ENCODE measurements at regions of chr15 and their contacts with region 1.

Region 1: DNA sequence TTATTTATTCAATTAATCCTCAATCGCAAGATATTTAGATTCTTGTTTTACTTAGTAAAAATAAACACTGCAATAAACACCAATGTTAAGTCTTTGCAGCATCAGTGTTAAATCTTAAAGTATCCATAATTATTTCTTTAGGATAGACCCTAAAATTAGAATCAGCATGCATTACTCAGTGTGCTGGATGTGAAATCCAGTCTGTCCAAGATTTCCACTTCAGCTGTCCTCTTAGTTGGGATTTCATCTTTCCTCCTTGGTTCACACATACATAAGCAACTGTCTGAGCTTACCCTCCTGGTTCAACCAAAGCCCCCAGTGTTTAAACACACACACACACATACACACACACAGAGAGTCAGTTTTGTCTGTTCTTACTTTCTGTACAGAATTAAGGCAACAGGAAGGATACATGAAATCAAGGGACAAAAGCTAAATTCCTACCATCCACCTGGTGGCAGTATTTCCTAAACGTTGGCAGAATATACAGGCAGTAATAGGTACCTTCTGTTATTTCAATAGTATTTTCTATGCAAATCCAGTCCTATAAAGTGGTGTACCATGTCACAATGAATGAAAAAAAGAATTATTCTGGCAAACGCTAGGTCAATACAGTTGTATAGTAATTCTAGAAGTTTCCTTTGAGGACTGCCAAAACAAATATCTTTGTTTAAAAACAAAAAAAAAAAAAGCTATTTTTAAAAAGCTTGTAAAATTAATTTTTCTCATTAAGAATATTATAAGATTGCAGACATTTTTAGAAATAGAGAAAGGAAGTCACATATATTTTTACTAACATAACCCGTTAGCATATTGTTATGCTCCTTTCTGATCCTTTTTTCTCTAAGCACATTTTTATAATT is 27.3 kb upstream of the DMXL2 start:
- DNase-seq: peak; percentile 47 to 88 (median 56)
- ATAC-seq: peak; percentile 74
- H3K4me3 ChIP-seq: no peak overlapping the region
- H3K27ac ChIP-seq: no peak overlapping the region
- H3K4me1 ChIP-seq: peaks cover 18 to 40% of the 10 kb centered on the region in 2 experiments
- H3K27me3 ChIP-seq: no peaks in the 10 kb centered on the region
- CTCF ChIP-seq: peak; percentile 74 to 95 (median 77); a peak in 5 of 6 replicates
- EP300 ChIP-seq: no peak
- POLR2A ChIP-seq: no peak
- RAD21 ChIP-seq: peak; percentile 99 to 100

Region 2: GRCh38 chr15:51401872-51402517 is 247.9 kb before region 1 on chr15:
- CTCF ChIA-PET with region 1: no interaction called
- POLR2A ChIA-PET with region 1: no interaction called
- in situ Hi-C with region 1: no loop called
- intact Hi-C with region 1: loop called (anchors 5 kb)
- DNase-seq: peak; percentile 54 to 68 (median 60)
- ATAC-seq: peak; percentile 84
- H3K4me3 ChIP-seq: no peak overlapping the region
- H3K27ac ChIP-seq: no peak overlapping the region
- H3K4me1 ChIP-seq: no peaks in the 10 kb centered on the region
- H3K27me3 ChIP-seq: peaks cover 39 to 40% of the 10 kb centered on the region in 2 experiments
- CTCF ChIP-seq: peak; percentile 73 to 87 (median 76)
- EP300 ChIP-seq: no peak
- POLR2A ChIP-seq: no peak
- RAD21 ChIP-seq: peak; percentile 47 to 70

Region 3: GRCh38 chr15:51672155-51672687 is 22.3 kb after region 1 on chr15:
- CTCF ChIA-PET with region 1: no interaction called
- POLR2A ChIA-PET with region 1: no interaction called
- in situ Hi-C with region 1: no loop called
- intact Hi-C with region 1: loop called (anchors 1 kb)
- DNase-seq: peak; percentile 27 to 81 (median 54)
- ATAC-seq: peak; percentile 79
- H3K4me3 ChIP-seq: no peak overlapping the region
- H3K27ac ChIP-seq: peak overlapping the region; percentile 72; the same call in 2 of the 3 replicates
- H3K4me1 ChIP-seq: peaks cover 24 to 38% of the 10 kb centered on the region in 2 experiments; a peak in 4 of 5 replicates
- H3K27me3 ChIP-seq: no peaks in the 10 kb centered on the region
- CTCF ChIP-seq: no peak
- EP300 ChIP-seq: peak; percentile 16; the same call in 1 of the 2 replicates
- POLR2A ChIP-seq: no peak
- RAD21 ChIP-seq: peak in 1 of 2 experiments; percentile 11; a peak in 1 of 4 replicates

Region 4: DNA sequence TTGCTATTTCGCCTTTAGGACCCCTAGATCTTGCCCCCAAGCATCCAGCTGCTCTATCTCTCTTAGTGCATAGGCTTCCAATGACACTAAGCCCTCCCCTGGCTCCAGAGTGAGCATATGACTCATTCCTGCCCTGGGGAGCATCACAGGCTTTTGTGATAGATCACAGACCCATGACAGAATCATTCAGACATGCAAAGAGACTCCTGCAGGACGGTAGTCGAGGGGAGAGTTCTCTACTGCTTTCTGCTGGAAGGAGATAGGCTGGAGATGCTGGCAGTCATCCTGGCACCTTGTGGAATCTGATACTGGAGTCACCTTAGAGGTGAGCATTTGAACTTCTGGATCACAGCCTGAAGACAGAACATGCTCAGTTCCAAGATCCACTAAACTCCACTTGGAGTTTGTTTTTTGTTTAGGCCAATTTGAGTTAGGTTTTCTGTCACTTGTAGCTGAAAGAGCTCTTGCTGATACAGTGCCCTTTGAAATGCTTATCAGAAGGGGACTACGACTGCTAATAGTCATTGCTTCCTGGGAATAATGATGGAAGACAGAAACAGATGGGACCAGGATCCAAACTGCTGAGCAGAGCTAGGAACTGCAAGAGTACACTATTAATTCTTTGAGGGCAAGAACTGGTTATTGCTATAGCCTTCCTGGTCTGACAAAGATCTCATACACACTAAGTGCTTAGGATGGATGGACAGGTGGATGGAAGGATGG is 76.6 kb after region 1 on chr15:
- CTCF ChIA-PET with region 1: interaction called, 3 read pairs
- POLR2A ChIA-PET with region 1: no interaction called
- in situ Hi-C with region 1: no loop called
- intact Hi-C with region 1: loop called (anchors 2 kb)
- DNase-seq: peak; percentile 74 to 84 (median 82)
- ATAC-seq: peak; percentile 93
- H3K4me3 ChIP-seq: no peak overlapping the region
- H3K27ac ChIP-seq: no peak overlapping the region
- H3K4me1 ChIP-seq: peaks cover 0 to 33% of the 10 kb centered on the region in 2 experiments; a peak in 4 of 5 replicates
- H3K27me3 ChIP-seq: no peaks in the 10 kb centered on the region
- CTCF ChIP-seq: no peak
- EP300 ChIP-seq: no peak
- POLR2A ChIP-seq: no peak
- RAD21 ChIP-seq: no peak

Region 5: DNA sequence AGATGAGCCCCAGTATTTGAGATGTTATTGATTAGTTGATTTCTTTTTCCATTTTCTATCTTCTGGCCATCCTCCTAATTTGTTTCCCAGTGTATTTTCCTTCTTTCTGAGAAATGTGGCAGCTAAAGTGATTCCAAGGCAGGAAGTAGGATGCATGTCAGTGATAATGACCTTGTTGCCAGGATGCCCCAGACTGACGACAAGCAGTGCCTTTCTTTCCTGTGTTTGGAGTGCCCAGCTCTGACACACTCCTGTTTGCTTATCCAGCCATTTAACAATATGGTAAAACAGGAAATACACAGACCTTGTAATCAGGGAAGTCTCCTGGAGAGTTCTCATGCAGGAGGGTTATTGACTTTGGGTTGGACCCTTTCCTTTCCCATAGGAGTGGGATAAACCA is 121.9 kb after region 1 on chr15:
- CTCF ChIA-PET with region 1: interaction called, 106 read pairs
- POLR2A ChIA-PET with region 1: interaction called, 12 read pairs
- in situ Hi-C with region 1: loop called (anchors 5 kb)
- intact Hi-C with region 1: loop called (anchors 1 kb)
- DNase-seq: no peak
- ATAC-seq: no peak
- H3K4me3 ChIP-seq: no peak overlapping the region
- H3K27ac ChIP-seq: no peak overlapping the region
- H3K4me1 ChIP-seq: peaks cover 0 to 10% of the 10 kb centered on the region in 2 experiments; a peak in 2 of 5 replicates
- H3K27me3 ChIP-seq: no peaks in the 10 kb centered on the region
- CTCF ChIP-seq: no peak
- EP300 ChIP-seq: no peak
- POLR2A ChIP-seq: no peak
- RAD21 ChIP-seq: no peak